ENCODE measurements at regions of chr5 and their contacts with region 1.

Region 1: GRCh38 chr5:431001-431710 is 11.8 kb upstream of the EXOC3 start:
- ATAC-seq: peak; percentile 32 to 95 (median 87)
- H3K4me3 ChIP-seq: no peak overlapping the region
- H3K27ac ChIP-seq: no peak overlapping the region
- H3K4me1 ChIP-seq: peaks cover 5 to 10% of the 10 kb centered on the region in 2 donors

Region 2: GRCh38 chr5:321230-321725 is 109.9 kb before region 1 on chr5 and contains the start of gene AHRR:
- in situ Hi-C with region 1: loop called in 2 of 9 experiments (anchors 10 kb)
- ATAC-seq: peak; percentile 82 to 89 (median 86)
- H3K4me3 ChIP-seq: peak within 1 kb of the TSS; percentile 37 to 69 (median 47)
- H3K27ac ChIP-seq: no peak within 1 kb of the TSS
- H3K4me1 ChIP-seq: peaks cover 4 to 9% of the 10 kb centered on the region in 2 donors
- total RNA-seq, gene AHRR: 1.1 to 24.0 (median 1.6) TPM

Measured in motor neuron (in vitro differentiated cells).